K562 (cell line): ENCODE measurements at regions of chr11 and their contacts with region 1.

Region 1: DNA sequence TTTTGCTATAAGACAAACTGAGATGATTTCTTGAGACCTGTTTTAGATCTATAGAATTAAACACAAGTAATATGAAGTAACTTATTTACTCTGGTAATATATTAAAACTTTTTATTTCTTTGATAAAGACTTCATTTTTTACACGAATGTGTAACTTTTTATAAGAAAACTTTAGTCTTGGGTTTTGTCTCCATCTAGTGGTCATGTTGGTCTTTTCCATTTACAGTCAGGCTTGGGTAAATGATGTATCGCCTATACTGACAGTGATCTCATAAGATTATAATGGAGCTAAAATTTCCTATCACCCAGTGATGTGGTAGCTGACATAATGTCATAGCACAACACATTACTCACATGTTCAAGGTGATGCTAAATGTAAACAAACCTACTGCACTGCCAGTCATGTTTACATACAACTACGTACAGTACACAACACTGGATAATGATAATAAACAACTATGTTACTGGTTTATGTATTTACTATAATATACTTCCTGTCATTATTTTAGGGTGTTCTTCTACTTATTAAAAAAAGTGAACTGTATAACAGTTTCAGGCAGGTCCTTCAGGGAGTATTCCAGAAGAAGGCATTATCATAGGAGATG is 7.5 kb upstream of the C11orf97 start:
- DNase-seq: peak; percentile 40 to 63 (median 44)
- ATAC-seq: peak; percentile 79
- H3K4me3 ChIP-seq: no peak overlapping the region
- H3K27ac ChIP-seq: no peak overlapping the region
- H3K4me1 ChIP-seq: no peaks in the 10 kb centered on the region
- H3K27me3 ChIP-seq: no peaks in the 10 kb centered on the region
- CTCF ChIP-seq: peak; percentile 52 to 75 (median 53); a peak in 4 of 6 replicates
- EP300 ChIP-seq: no peak
- POLR2A ChIP-seq: no peak
- RAD21 ChIP-seq: peak; percentile 81 to 86

Region 2: DNA sequence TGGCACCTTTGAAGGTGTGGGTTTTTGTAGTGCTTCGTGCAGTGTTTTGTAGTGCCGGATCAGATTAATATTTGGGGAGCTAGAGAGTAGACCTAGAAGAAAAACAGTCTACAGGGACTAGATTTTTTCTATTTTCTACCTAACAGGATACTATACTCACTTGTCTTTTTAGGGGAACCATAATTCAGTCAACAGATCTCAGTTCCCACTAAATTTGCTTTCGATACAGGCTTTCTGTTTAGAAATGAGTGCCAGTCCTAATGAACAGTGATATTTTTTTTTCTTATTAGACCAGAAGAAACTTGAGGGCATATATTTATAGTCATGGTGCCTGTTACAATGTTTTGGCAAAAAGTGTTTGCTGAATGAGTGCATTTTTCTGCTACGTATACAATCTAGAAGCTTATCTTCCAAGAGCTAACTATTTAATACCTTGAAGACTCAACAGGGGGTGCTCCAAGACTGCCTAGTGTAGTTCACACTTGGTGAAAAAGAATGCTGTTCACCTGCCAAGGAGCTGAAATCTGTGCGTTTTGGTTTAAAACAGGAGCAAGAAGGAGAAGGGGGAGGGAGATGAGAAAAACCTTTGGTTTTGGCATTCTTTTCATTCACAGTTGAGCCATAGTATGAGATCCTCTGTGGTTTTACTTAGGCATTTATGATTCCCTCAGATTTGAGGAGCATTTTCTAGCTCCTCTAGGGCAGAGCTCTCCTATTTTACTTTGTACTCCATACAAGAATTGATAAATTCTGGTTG is 609.5 kb before region 1 on chr11:
- CTCF ChIA-PET with region 1: interaction called, 13 read pairs
- POLR2A ChIA-PET with region 1: no interaction called
- in situ Hi-C with region 1: loop called (anchors 10 kb)
- intact Hi-C with region 1: loop called (anchors 1 kb)
- DNase-seq: peak; percentile 41 to 67 (median 46)
- ATAC-seq: peak; percentile 90
- H3K4me3 ChIP-seq: no peak overlapping the region
- H3K27ac ChIP-seq: no peak overlapping the region
- H3K4me1 ChIP-seq: no peaks in the 10 kb centered on the region
- H3K27me3 ChIP-seq: peaks cover 4 to 15% of the 10 kb centered on the region in 2 experiments; a peak in 4 of 5 replicates
- CTCF ChIP-seq: peak; percentile 66 to 88 (median 78)
- EP300 ChIP-seq: no peak
- POLR2A ChIP-seq: no peak
- RAD21 ChIP-seq: peak; percentile 93 to 95

Region 3: GRCh38 chr11:93921695-93922468 is 582.9 kb before region 1 on chr11:
- CTCF ChIA-PET with region 1: interaction called, 3 read pairs
- POLR2A ChIA-PET with region 1: no interaction called
- in situ Hi-C with region 1: no loop called
- intact Hi-C with region 1: loop called (anchors 10 kb)
- DNase-seq: peak; percentile 53 to 75 (median 61)
- ATAC-seq: peak; percentile 98
- H3K4me3 ChIP-seq: no peak overlapping the region
- H3K27ac ChIP-seq: no peak overlapping the region
- H3K4me1 ChIP-seq: no peaks in the 10 kb centered on the region
- H3K27me3 ChIP-seq: no peaks in the 10 kb centered on the region
- CTCF ChIP-seq: peak; percentile 78 to 86 (median 83)
- EP300 ChIP-seq: no peak
- POLR2A ChIP-seq: no peak
- RAD21 ChIP-seq: peak; percentile 69 to 93

Region 4: DNA sequence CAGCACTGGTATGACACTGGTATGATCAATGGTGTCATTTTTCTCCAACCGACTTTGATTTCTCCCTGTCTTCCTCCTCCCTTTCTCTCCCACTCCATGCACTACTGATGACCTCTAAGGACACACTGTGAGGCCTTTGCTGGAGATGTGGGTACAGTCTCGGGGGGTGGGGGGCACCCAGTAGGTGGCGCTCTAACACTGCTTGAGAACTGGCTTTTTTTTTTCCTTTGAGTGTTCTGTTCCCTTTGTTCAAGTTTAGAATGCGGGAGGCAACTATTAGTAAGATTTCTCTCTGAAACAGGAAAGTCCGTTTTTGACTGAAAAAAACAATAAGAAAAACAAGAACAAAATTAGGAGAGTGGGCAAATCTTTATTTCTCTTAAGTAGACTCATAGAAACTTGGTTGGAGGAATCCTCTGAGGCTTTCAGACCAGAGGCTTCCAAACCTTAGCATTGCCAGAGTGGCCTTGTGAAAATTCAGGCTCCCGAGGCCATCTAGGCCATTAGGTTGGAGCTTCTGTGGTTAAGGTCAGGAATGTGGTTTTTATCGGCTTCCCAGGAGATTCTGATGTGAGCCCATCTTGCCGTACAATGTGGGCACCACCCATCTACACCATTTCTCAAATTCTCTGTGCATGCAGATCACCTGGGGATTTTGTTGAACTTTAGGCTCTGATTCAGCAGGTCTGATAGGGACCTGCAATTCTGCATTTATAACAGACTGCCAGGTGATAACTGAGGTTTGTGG is 332.9 kb before region 1 on chr11:
- CTCF ChIA-PET with region 1: interaction called, 5 read pairs
- POLR2A ChIA-PET with region 1: no interaction called
- in situ Hi-C with region 1: loop called (anchors 10 kb)
- intact Hi-C with region 1: loop called (anchors 1 kb)
- DNase-seq: peak; percentile 75 to 84 (median 82)
- ATAC-seq: peak; percentile 96
- H3K4me3 ChIP-seq: no peak overlapping the region
- H3K27ac ChIP-seq: no peak overlapping the region
- H3K4me1 ChIP-seq: no peaks in the 10 kb centered on the region; a peak in 1 of 5 replicates
- H3K27me3 ChIP-seq: no peaks in the 10 kb centered on the region
- CTCF ChIP-seq: peak; percentile 77 to 91 (median 79)
- EP300 ChIP-seq: no peak
- POLR2A ChIP-seq: no peak
- RAD21 ChIP-seq: peak; percentile 50 to 60; a peak in 3 of 4 replicates

Region 5: GRCh38 chr11:94183886-94184264 is 320.9 kb before region 1 on chr11:
- CTCF ChIA-PET with region 1: interaction called, 4 read pairs
- POLR2A ChIA-PET with region 1: no interaction called
- in situ Hi-C with region 1: loop called (anchors 10 kb)
- intact Hi-C with region 1: loop called (anchors 1 kb)
- DNase-seq: peak; percentile 61 to 80 (median 66)
- ATAC-seq: peak; percentile 96
- H3K4me3 ChIP-seq: no peak overlapping the region
- H3K27ac ChIP-seq: no peak overlapping the region
- H3K4me1 ChIP-seq: no peaks in the 10 kb centered on the region; a peak in 1 of 5 replicates
- H3K27me3 ChIP-seq: no peaks in the 10 kb centered on the region
- CTCF ChIP-seq: peak; percentile 79 to 95 (median 80)
- EP300 ChIP-seq: no peak
- POLR2A ChIP-seq: no peak
- RAD21 ChIP-seq: peak; percentile 62 to 79

Region 6: GRCh38 chr11:94325681-94326080 is 179.1 kb before region 1 on chr11:
- CTCF ChIA-PET with region 1: interaction called, 12 read pairs
- POLR2A ChIA-PET with region 1: no interaction called
- in situ Hi-C with region 1: loop called (anchors 10 kb)
- intact Hi-C with region 1: loop called (anchors 1 kb)
- DNase-seq: peak; percentile 60 to 65 (median 64)
- ATAC-seq: peak; percentile 95
- H3K4me3 ChIP-seq: no peak overlapping the region
- H3K27ac ChIP-seq: no peak overlapping the region
- H3K4me1 ChIP-seq: no peaks in the 10 kb centered on the region
- H3K27me3 ChIP-seq: peaks cover 4 to 7% of the 10 kb centered on the region in 2 experiments; a peak in 3 of 5 replicates
- CTCF ChIP-seq: peak; percentile 79 to 84 (median 80)
- EP300 ChIP-seq: no peak
- POLR2A ChIP-seq: no peak
- RAD21 ChIP-seq: peak; percentile 83 to 87

Region 7: GRCh38 chr11:95279921-95280868 is 775.4 kb after region 1 on chr11:
- CTCF ChIA-PET with region 1: no interaction called
- POLR2A ChIA-PET with region 1: no interaction called
- in situ Hi-C with region 1: no loop called
- intact Hi-C with region 1: no loop called
- DNase-seq: no peak
- ATAC-seq: no peak
- H3K4me3 ChIP-seq: no peak overlapping the region
- H3K27ac ChIP-seq: no peak overlapping the region
- H3K4me1 ChIP-seq: no peaks in the 10 kb centered on the region
- H3K27me3 ChIP-seq: peaks cover 0 to 2% of the 10 kb centered on the region in 2 experiments; a peak in 1 of 5 replicates
- CTCF ChIP-seq: no peak
- EP300 ChIP-seq: no peak
- POLR2A ChIP-seq: no peak
- RAD21 ChIP-seq: no peak